HepG2 (cell line): ENCODE measurements at regions of chr17 and their contacts with region 1.

Region 1: GRCh38 chr17:49575579-49576087 is at the start of gene NXPH3:
- DNase-seq: peak; percentile 47
- ATAC-seq: peak; percentile 71
- H3K4me3 ChIP-seq: peak within 1 kb of the TSS; percentile 62 to 84 (median 78)
- H3K27ac ChIP-seq: no peak within 1 kb of the TSS
- H3K4me1 ChIP-seq: peaks cover 32% of the 10 kb centered on the region
- H3K27me3 ChIP-seq: peaks cover 5 to 76% of the 10 kb centered on the region in 2 experiments
- CTCF ChIP-seq: peak; percentile 64
- EP300 ChIP-seq: no peak
- POLR2A ChIP-seq: no peak
- RAD21 ChIP-seq: peak; percentile 88
- total RNA-seq, gene NXPH3: 0.04 and 0.08 TPM in 2 replicates

Region 2: DNA sequence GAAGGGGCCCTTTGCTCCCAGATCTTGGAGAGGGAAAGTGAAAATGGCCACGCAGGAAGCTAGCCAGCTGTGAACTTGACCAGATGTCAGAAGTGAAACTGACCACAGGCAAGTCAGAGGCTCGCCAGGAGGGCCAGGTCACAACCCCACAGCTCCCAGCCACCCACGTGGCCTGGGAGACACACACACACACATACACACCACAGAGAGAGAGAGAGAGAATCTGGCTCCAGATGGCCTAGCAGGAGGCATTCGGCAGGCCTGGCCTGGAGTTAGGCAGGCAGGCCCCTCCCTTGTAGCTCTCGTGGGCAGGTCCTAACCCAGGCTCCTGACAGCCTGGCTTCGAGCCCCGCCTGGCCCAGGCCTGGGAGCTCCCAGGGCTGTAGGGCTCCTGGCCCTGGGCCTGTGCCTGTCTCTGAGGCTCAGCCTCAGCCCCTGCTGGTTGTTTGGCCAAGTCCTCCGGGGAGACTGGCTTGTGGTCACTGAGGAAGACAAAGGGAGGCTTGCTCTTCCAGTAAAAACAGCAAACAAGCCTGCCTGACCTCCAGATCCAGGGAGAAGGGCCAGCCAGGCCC is 60.4 kb before region 1 on chr17:
- CTCF ChIA-PET with region 1: no interaction called
- POLR2A ChIA-PET with region 1: no interaction called
- in situ Hi-C with region 1: no loop called
- intact Hi-C with region 1: no loop called
- DNase-seq: peak; percentile 79
- ATAC-seq: peak; percentile 95
- H3K4me3 ChIP-seq: peak overlapping the region; percentile 46 to 72 (median 52)
- H3K27ac ChIP-seq: no peak overlapping the region
- H3K4me1 ChIP-seq: peaks cover 32% of the 10 kb centered on the region
- H3K27me3 ChIP-seq: peaks cover 2 to 28% of the 10 kb centered on the region in 2 experiments; a peak in 4 of 5 replicates
- CTCF ChIP-seq: peak; percentile 34; the same call in 1 of the 2 replicates
- EP300 ChIP-seq: no peak
- POLR2A ChIP-seq: peak in 1 of 2 experiments; percentile 72; a peak in 3 of 4 replicates
- RAD21 ChIP-seq: peak; percentile 43; the same call in 1 of the 2 replicates

Region 3: DNA sequence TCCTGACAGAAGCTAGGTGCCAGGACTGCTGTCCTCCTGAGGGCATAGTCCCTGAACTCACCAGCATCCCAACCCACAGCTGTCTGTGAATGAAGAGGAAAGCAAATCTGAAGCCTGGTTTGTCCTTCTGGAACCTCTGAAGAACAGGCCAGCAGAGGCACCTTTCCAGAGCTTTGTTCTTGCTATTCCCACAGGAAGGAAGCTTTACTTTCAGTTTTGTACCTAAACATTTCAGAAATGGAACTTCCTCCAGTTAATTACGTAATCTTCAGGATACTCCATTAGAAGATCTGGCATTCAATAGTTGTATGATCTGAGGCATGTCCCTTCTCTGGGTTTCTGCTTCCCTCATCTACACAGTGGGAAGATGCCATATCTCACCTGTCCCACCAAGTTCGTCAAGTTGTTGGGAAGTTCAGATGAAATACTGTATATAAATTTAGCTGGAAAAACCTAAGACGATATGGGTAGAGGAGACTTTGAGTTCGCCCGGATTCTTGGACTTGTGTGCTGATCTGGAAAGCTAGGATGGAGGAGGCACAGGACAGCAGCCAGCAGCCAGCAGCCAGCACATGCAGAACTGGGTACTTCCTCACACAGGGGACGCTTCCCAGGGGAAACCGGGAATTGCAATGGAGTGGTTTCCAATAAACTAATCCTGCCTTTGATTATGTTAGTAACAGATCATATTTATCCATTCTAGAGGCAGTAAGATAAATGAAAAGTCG is 22.5 kb after region 1 on chr17:
- CTCF ChIA-PET with region 1: no interaction called
- POLR2A ChIA-PET with region 1: no interaction called
- in situ Hi-C with region 1: no loop called
- intact Hi-C with region 1: loop called (anchors 2 kb)
- DNase-seq: peak; percentile 23
- ATAC-seq: no peak
- H3K4me3 ChIP-seq: no peak overlapping the region
- H3K27ac ChIP-seq: peak overlapping the region; percentile 58
- H3K4me1 ChIP-seq: peaks cover 48% of the 10 kb centered on the region
- H3K27me3 ChIP-seq: no peaks in the 10 kb centered on the region
- CTCF ChIP-seq: no peak
- EP300 ChIP-seq: no peak
- POLR2A ChIP-seq: no peak
- RAD21 ChIP-seq: no peak

Region 4: GRCh38 chr17:49694847-49695683 is 119.4 kb after region 1 on chr17:
- CTCF ChIA-PET with region 1: interaction called, 210 read pairs
- POLR2A ChIA-PET with region 1: interaction called, 9 read pairs
- in situ Hi-C with region 1: no loop called
- intact Hi-C with region 1: no loop called
- DNase-seq: peak; percentile 30
- ATAC-seq: peak; percentile 39
- H3K4me3 ChIP-seq: peak overlapping the region in 2 of 3 experiments; percentile 13 to 59; a peak in 3 of 6 replicates
- H3K27ac ChIP-seq: no peak overlapping the region
- H3K4me1 ChIP-seq: peaks cover 29% of the 10 kb centered on the region
- H3K27me3 ChIP-seq: peaks cover 0 to 17% of the 10 kb centered on the region in 2 experiments; a peak in 2 of 5 replicates
- CTCF ChIP-seq: peak; percentile 86
- EP300 ChIP-seq: no peak
- POLR2A ChIP-seq: no peak
- RAD21 ChIP-seq: peak; percentile 93